Left cardiac atrium (tissue), 4 donors: ENCODE measurements at regions of chr14 and their contacts with region 1.

Region 1: GRCh38 chr14:34098045-34098984 is 147.4 kb upstream of the EGLN3 start:
- DNase-seq: no peak
- ATAC-seq: peak; percentile 45 to 60

Region 2: GRCh38 chr14:33839193-33840076 is 258.9 kb before region 1 on chr14:
- intact Hi-C with region 1: loop called in 1 of 2 experiments (anchors 2 kb)
- DNase-seq: peak; percentile 55
- ATAC-seq: peak; percentile 66 to 73

Region 3: GRCh38 chr14:33848706-33849454 is 249.4 kb before region 1 on chr14:
- intact Hi-C with region 1: loop called in 1 of 2 experiments (anchors 5 kb)
- DNase-seq: peak; percentile 65
- ATAC-seq: peak; percentile 90 to 94

Region 4: GRCh38 chr14:33922125-33922524 is 176.2 kb before region 1 on chr14:
- intact Hi-C with region 1: no loop called
- DNase-seq: no peak
- ATAC-seq: no peak

Region 5: DNA sequence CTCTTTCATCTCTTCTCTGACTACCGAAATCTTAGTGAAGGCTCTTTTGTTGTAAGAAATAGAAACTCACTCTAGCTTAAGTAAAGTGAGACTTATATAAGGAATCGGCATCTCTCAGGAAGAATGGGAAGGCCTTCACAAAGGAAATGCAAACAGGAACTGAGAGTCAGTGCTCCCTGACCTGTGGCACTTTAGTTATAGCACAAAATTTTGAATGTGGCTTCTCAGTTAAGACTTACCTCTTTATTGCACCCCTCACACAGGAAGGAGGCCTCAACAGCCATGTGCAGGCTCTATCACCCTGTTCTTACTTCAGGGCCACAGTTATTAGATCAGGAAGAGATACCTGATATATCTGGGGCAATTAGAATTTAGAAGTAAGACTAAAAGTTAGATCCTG is 77.3 kb after region 1 on chr14:
- intact Hi-C with region 1: no loop called
- DNase-seq: no peak
- ATAC-seq: no peak

Region 6: DNA sequence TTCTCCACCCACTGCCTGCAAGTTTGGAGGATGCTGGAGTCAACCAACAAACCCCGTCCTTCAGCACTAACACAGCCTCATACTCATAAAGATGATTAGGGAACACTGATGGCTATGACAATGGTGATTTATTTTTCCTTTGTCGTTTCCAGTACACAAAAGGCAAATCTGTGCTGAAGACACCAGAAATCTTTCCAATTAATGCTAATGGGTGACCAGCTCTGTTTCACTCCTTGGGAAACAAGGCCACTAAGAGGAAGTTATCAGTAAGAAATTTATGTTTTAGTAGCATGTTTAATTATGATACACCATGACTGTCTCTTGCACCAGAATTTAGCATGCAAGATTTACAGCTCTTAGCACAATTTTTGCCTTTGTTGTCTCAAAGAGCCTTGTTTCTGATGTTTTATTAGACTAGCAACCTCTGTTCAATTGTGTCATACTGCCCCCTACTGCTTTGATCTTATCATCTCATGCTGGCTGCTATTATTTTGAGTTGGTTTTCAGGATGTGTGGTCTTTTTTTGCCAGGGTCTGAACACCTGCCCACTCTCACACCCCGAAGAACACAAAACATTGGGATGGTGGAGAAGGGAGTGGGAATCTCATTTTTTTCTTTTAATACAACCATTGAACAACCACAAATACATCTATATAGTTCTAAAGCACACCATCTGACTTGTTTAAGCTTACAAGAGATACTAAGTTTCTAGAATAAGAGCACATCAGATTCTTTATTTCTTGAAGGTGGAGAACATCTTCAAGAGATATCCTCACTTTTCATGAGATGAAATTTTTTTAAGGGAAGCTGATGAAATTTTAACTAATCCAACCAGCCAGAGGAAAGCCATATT is 202.8 kb after region 1 on chr14:
- intact Hi-C with region 1: loop called in 1 of 2 experiments (anchors 10 kb)
- DNase-seq: no peak
- ATAC-seq: peak in 1 of 2 donors; percentile 37